Heart left ventricle (tissue), 16 donors: ENCODE measurements at regions of chr13 and their contacts with region 1.

Region 1: GRCh38 chr13:99436686-99437416 is 64.4 kb upstream of the TM9SF2 start:
- DNase-seq: peak; percentile 82 to 93 (median 86)
- ATAC-seq: peak in 3 of 4 donors; percentile 59 to 72 (median 66)
- H3K4me3 ChIP-seq: peak overlapping the region in 1 of 12 donors; percentile 6
- H3K27ac ChIP-seq: no peak overlapping the region
- H3K4me1 ChIP-seq: peaks cover 0 to 36% (median 8%) of the 10 kb centered on the region in 12 donors
- H3K27me3 ChIP-seq: peaks cover 0 to 31% (median 11%) of the 10 kb centered on the region in 9 donors
- CTCF ChIP-seq: peak; percentile 99 to 100 (median 100)
- POLR2A ChIP-seq: no peak

Region 2: GRCh38 chr13:99176309-99177276 is 260.3 kb before region 1 on chr13:
- intact Hi-C with region 1: loop called (anchors 1 to 2 kb)
- DNase-seq: peak; percentile 66 to 81 (median 70)
- ATAC-seq: peak; percentile 63 to 93 (median 90)
- H3K4me3 ChIP-seq: no peak overlapping the region
- H3K27ac ChIP-seq: no peak overlapping the region
- H3K4me1 ChIP-seq: peaks cover 0 to 21% (median 0%) of the 10 kb centered on the region in 12 donors
- H3K27me3 ChIP-seq: peaks cover 0 to 43% (median 5%) of the 10 kb centered on the region in 9 donors
- CTCF ChIP-seq: peak; percentile 90 to 97 (median 93)
- POLR2A ChIP-seq: no peak

Region 3: GRCh38 chr13:99275093-99275469 is 161.8 kb before region 1 on chr13:
- intact Hi-C with region 1: loop called in 4 of 10 experiments (anchors 1 to 2 kb)
- DNase-seq: peak in 1 of 5 donors; percentile 24
- ATAC-seq: peak in 2 of 4 donors; percentile 35 to 49
- H3K4me3 ChIP-seq: no peak overlapping the region
- H3K27ac ChIP-seq: no peak overlapping the region
- H3K4me1 ChIP-seq: peaks cover 0 to 77% (median 0%) of the 10 kb centered on the region in 12 donors
- H3K27me3 ChIP-seq: no peaks in the 10 kb centered on the region
- CTCF ChIP-seq: no peak
- POLR2A ChIP-seq: no peak